ENCODE measurements at regions of chr1 and their contacts with region 1.

Region 1: GRCh38 chr1:153717330-153717729 is 10.5 kb upstream of the INTS3 start:
- DNase-seq: no peak
- H3K4me3 ChIP-seq: no peak overlapping the region
- H3K27ac ChIP-seq: no peak overlapping the region
- H3K4me1 ChIP-seq: no peaks in the 10 kb centered on the region
- H3K27me3 ChIP-seq: no peaks in the 10 kb centered on the region
- CTCF ChIP-seq: no peak
- POLR2A ChIP-seq: no peak

Region 2: DNA sequence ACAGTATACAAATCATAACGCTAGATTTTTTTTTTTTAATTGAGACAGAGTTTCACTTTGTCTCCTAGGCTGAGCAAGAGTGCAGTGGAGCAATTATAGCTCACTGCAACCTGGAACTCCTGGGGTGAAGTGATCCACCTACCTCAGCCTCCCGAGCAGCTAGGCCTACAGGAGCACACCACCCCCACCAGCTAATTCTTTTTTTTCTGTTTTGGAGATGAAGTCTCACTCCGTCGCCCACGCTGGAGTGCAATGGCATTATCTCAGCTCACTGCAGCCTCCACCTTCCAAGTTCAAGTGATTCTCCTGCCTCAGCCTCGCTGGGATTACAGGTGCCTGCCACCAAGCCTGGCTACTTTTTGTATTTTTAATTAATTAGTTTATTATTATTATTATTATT is 17.6 kb before region 1 on chr1:
- intact Hi-C with region 1: loop called (anchors 2 kb)
- DNase-seq: no peak
- H3K4me3 ChIP-seq: no peak overlapping the region
- H3K27ac ChIP-seq: peak overlapping the region in 1 of 2 donors; percentile 55
- H3K4me1 ChIP-seq: peaks cover 22% of the 10 kb centered on the region
- H3K27me3 ChIP-seq: no peaks in the 10 kb centered on the region
- CTCF ChIP-seq: no peak
- POLR2A ChIP-seq: no peak

Measured in testis (tissue), 5 donors.